ENCODE measurements at regions of chr17 and their contacts with region 1.

Region 1: GRCh38 chr17:2244545-2245525 is 58.8 kb downstream of the SMG6 start:
- DNase-seq: peak; percentile 73 to 91 (median 82)
- ATAC-seq: peak; percentile 96
- H3K4me3 ChIP-seq: no peak overlapping the region
- H3K4me3 Mint-ChIP-seq: no peak overlapping the region
- H3K27ac ChIP-seq: no peak overlapping the region
- H3K27ac Mint-ChIP-seq: peak overlapping the region; percentile 57
- H3K4me1 ChIP-seq: peaks cover 11% of the 10 kb centered on the region
- H3K4me1 Mint-ChIP-seq: peaks cover 40% of the 10 kb centered on the region
- H3K27me3 ChIP-seq: no peaks in the 10 kb centered on the region
- H3K27me3 Mint-ChIP-seq: no peaks in the 10 kb centered on the region
- CTCF ChIP-seq: peak; percentile 94

Region 2: GRCh38 chr17:2090804-2091534 is 153.9 kb before region 1 on chr17:
- CTCF ChIA-PET with region 1: interaction called, 14 read pairs
- POLR2A ChIA-PET with region 1: interaction called, 3 read pairs
- intact Hi-C with region 1: no loop called
- DNase-seq: no peak
- ATAC-seq: no peak
- H3K4me3 ChIP-seq: no peak overlapping the region
- H3K4me3 Mint-ChIP-seq: peak overlapping the region; percentile 93
- H3K27ac ChIP-seq: peak overlapping the region in 1 of 2 donors; percentile 60
- H3K27ac Mint-ChIP-seq: peak overlapping the region; percentile 81
- H3K4me1 ChIP-seq: peaks cover 51% of the 10 kb centered on the region
- H3K4me1 Mint-ChIP-seq: peaks cover 50% of the 10 kb centered on the region
- H3K27me3 ChIP-seq: no peaks in the 10 kb centered on the region
- H3K27me3 Mint-ChIP-seq: no peaks in the 10 kb centered on the region
- CTCF ChIP-seq: no peak

Region 3: GRCh38 chr17:2215616-2216364 is 29.0 kb before region 1 on chr17:
- CTCF ChIA-PET with region 1: interaction called, 8 read pairs
- POLR2A ChIA-PET with region 1: interaction called, 3 read pairs
- intact Hi-C with region 1: loop called in 1 of 2 experiments (anchors 2 kb)
- DNase-seq: peak; percentile 54 to 88 (median 64)
- ATAC-seq: peak; percentile 93
- H3K4me3 ChIP-seq: peak overlapping the region; percentile 37
- H3K4me3 Mint-ChIP-seq: peak overlapping the region; percentile 68
- H3K27ac ChIP-seq: peak overlapping the region; percentile 81 to 83
- H3K27ac Mint-ChIP-seq: peak overlapping the region; percentile 95
- H3K4me1 ChIP-seq: peaks cover 44% of the 10 kb centered on the region
- H3K4me1 Mint-ChIP-seq: peaks cover 58% of the 10 kb centered on the region
- H3K27me3 ChIP-seq: no peaks in the 10 kb centered on the region
- H3K27me3 Mint-ChIP-seq: no peaks in the 10 kb centered on the region
- CTCF ChIP-seq: no peak

Region 4: DNA sequence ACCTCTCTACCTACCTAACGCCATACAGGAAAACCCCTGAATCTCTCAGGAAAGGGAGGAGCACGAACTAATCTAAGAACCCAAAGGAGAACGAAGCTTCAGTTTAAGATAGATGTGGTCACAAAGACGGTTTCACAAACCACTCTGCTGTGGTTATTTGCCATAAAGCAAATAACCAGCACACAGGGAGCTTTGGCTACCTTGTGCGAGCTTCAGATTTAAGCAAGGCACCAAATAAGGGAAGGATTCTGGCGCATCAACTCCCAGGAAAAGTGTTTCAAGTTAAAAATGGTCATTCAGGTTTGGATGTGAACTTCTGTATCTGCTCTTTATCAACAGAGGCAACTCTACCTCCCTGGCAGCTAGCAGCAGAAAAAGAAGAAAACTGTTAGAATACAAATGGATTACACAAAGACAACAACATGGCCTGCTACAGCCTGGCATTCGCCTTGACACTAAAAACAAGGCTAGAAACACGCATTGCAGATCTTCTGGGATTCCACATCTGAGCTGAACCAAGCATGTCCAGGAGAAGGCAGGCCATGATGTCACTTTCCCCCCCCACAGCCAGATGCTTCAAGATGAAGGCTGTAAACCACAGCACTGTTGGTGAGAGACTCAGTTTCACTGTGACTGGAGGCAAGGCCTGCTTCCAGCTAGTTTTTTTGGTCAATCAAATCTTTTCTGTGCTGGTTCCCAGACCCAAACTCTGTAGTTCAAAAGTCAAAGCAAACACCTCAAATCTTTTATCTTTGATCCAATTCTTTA is 15.1 kb after region 1 on chr17:
- CTCF ChIA-PET with region 1: interaction called, 53 read pairs
- POLR2A ChIA-PET with region 1: interaction called, 77 read pairs
- intact Hi-C with region 1: loop called in 1 of 2 experiments (anchors 2 kb)
- DNase-seq: peak; percentile 17 to 84 (median 46)
- ATAC-seq: peak; percentile 55
- H3K4me3 ChIP-seq: peak overlapping the region; percentile 12
- H3K4me3 Mint-ChIP-seq: peak overlapping the region; percentile 85
- H3K27ac ChIP-seq: peak overlapping the region; percentile 63 to 76
- H3K27ac Mint-ChIP-seq: peak overlapping the region; percentile 98
- H3K4me1 ChIP-seq: peaks cover 68% of the 10 kb centered on the region
- H3K4me1 Mint-ChIP-seq: peaks cover 75% of the 10 kb centered on the region
- H3K27me3 ChIP-seq: no peaks in the 10 kb centered on the region
- H3K27me3 Mint-ChIP-seq: no peaks in the 10 kb centered on the region
- CTCF ChIP-seq: no peak

Region 5: DNA sequence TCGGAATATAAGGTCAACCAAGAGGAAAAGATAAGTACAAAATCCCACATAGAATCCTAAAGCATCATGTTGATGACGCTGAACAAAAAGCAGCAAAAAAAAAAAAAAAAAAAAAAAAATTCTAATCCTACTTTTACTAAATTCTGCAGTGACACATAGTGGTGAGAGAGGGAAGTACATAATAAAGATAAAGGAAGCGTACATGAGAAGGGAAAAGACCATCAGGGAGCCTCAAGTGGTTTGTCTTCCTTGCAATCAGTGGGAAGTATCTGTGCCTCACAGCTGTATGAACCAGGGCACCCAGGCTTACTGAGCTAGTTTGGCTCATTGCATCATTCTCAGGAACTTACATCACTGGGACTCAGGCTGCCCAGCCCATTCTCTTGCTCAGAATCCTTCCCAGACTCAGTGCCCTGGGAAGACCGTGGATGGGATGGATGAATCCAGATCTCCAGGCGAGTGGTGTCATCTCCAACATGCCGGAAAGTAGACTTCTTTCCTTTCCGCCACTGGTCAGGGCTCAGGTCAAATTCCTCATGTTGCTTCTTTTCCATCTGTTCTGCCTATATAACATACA is 37.5 kb after region 1 on chr17:
- CTCF ChIA-PET with region 1: interaction called, 30 read pairs
- POLR2A ChIA-PET with region 1: no interaction called
- intact Hi-C with region 1: loop called (anchors 1 kb)
- DNase-seq: peak in 4 of 14 experiments; percentile 10 to 81 (median 76)
- ATAC-seq: peak; percentile 80
- H3K4me3 ChIP-seq: no peak overlapping the region
- H3K4me3 Mint-ChIP-seq: no peak overlapping the region
- H3K27ac ChIP-seq: no peak overlapping the region
- H3K27ac Mint-ChIP-seq: peak overlapping the region; percentile 58
- H3K4me1 ChIP-seq: peaks cover 14% of the 10 kb centered on the region
- H3K4me1 Mint-ChIP-seq: peaks cover 35% of the 10 kb centered on the region
- H3K27me3 ChIP-seq: no peaks in the 10 kb centered on the region
- H3K27me3 Mint-ChIP-seq: no peaks in the 10 kb centered on the region
- CTCF ChIP-seq: peak; percentile 78

Measured in CD4-positive, alpha-beta T cell (primary cell).